BJ (cell line): ENCODE measurements at regions of chr10 and their contacts with region 1.

Region 1: GRCh38 chr10:72048450-72049124 is 39.8 kb downstream of the SPOCK2 start:
- DNase-seq: peak; percentile 51
- H3K4me3 ChIP-seq: no peak overlapping the region
- H3K27me3 ChIP-seq: peaks cover 2% of the 10 kb centered on the region; the same call in 1 of the 2 replicates
- CTCF ChIP-seq: peak; percentile 99

Region 2: DNA sequence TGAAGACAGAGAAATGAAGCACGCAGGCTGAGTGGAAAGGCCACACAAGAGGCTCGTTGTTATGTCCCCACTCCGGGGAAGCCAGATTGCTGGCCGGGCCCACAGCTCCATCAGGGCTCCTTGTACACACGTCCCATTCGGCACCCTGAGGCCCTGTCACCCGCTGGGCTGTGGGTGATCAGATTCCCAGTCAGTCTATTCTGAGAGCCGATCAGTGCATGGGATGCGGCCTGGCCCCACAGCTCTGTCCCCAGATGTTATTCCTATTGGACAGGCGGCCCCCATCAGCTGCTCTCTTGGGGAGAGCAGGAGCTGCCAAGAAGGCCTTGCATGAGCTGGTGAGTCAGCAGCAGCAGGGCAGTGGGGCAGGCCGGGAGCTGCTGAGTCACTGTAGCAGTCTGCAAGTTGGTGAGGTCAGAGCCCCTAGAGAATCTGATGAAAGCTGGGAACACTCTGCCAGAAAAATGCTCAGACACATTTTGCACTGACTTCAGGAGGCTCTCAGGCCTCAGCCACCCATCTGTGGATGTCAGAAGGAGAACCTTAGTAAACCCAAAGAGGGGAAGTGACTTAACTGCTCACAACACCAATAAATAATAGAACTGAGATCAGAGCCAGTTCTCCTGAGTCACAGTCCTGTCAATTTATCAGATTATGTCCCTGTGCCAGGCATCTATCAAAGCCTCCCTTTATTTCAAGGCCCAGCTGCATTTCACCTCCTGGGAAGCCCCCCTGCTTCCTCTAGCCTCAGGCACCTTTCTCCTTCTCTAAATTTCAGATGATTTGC is 188.2 kb before region 1 on chr10:
- CTCF ChIA-PET with region 1: no interaction called
- POLR2A ChIA-PET with region 1: interaction called, 18 read pairs
- DNase-seq: peak; percentile 100
- H3K4me3 ChIP-seq: no peak overlapping the region
- H3K27me3 ChIP-seq: no peaks in the 10 kb centered on the region
- CTCF ChIP-seq: no peak

Region 3: DNA sequence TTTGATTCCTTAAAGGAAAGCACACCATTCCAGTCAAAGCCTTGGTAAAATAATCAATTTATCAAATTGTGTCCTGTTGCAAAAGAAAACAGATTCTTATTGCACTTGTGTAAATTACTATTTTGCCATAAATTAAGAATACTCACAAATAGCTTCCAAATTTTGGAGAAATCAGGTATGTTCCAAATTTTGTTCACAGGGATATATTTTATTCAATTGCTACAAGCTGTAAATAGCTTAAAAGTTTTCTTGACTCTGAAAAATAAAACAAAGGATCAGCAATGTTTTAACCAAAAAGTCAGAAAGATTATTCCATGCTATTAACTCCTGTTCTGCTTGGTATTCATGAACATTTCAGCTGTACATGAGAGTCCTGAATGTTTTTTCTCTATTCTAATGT is 131.8 kb before region 1 on chr10:
- CTCF ChIA-PET with region 1: interaction called, 14 read pairs
- POLR2A ChIA-PET with region 1: no interaction called
- DNase-seq: no peak
- H3K4me3 ChIP-seq: no peak overlapping the region
- H3K27me3 ChIP-seq: no peaks in the 10 kb centered on the region
- CTCF ChIP-seq: no peak

Region 4: DNA sequence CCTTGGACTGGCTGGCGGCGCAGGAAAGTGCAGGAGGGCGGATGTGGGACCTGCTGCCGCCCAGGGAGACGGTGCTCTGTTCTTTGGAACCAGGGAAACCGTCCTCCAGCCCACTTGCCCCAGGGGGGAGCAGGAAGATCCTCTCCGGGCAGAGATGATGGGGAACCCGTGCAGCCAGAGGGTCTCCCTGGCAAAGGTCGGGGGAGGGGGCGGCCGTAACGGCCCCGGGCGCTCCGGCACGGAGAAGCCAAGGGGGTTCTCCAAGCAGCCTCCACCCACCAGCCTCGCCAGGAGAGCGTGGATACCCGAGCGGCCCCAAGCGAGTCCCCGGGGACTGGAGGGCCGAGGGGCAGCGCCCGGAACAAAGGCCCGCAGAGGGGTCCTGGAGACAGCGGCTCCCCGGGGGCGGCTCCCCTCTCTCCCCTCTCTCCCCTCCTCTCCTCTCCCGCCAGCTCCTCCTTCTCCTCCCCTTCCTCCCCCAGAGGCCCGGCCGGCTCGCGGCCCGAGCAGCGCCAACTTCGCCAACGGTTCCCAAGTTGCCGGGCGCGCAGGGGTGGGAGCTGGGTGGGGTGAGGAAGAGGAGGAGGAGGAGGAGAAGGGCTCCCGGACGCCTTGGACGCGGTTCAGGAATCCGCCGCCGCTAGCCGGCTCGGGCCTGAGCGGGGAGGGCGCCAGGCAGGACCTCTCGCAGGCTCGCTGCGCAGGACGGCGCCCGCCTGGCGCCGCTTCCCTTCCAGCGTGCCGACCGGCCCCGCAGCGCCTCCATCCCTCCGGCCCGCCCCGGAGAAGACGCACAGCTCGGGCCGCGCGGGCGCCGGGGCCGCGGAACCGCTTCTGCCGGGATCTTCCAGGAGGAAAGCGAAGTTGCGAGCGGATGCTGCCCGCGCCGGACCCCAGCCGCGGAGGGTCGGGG is 84.6 kb before region 1 on chr10 and contains the start of gene CHST3:
- CTCF ChIA-PET with region 1: interaction called, 237 read pairs
- POLR2A ChIA-PET with region 1: no interaction called
- DNase-seq: no peak
- H3K4me3 ChIP-seq: peak within 1 kb of the TSS; percentile 86
- H3K27me3 ChIP-seq: no peaks in the 10 kb centered on the region
- CTCF ChIP-seq: no peak
- polyA plus RNA-seq, gene CHST3: 15.3 and 20.9 TPM in 2 replicates

Region 5: DNA sequence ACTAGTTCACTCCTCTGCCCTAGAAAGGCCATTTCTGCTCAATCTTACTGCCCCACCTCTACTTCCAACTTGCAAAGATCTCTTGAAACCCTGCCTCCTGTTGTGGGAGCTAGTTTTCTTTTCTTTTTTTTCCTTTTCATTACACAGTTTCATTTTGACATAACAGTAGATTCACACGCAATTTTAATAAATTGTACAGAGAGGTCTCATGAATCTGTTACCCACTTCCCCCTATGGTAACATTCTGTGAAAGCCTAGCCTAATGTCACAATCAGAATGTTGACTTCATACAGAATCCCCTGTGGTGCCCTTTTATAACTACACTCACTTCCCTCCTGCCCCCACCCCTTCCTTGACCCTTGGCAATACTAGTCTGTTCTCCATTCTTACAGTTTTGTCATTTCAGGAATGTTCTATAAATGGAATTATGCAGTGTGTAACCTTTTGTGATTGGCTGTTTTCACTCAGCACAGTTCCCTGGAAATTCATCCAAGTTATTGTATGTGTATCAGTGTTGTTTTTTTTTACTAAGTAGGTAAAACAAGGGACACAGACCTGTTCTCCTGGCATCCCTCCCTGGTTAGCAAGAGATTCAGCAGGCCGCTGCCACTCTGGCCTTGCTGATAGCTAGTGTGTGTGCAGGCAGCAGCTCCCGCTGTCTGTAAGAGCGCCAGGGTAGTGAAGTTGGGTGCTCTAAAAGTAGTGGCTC is 62.9 kb before region 1 on chr10:
- CTCF ChIA-PET with region 1: interaction called, 10 read pairs
- POLR2A ChIA-PET with region 1: no interaction called
- DNase-seq: peak; percentile 59
- H3K4me3 ChIP-seq: no peak overlapping the region
- H3K27me3 ChIP-seq: no peaks in the 10 kb centered on the region
- CTCF ChIP-seq: peak; percentile 23; the same call in 1 of the 2 replicates

Region 6: GRCh38 chr10:72061491-72061890 is 12.9 kb after region 1 on chr10:
- CTCF ChIA-PET with region 1: interaction called, 17 read pairs
- POLR2A ChIA-PET with region 1: no interaction called
- DNase-seq: no peak
- H3K4me3 ChIP-seq: no peak overlapping the region
- H3K27me3 ChIP-seq: peaks cover 7% of the 10 kb centered on the region; the same call in 1 of the 2 replicates
- CTCF ChIP-seq: peak; percentile 30; the same call in 1 of the 2 replicates

Region 7: DNA sequence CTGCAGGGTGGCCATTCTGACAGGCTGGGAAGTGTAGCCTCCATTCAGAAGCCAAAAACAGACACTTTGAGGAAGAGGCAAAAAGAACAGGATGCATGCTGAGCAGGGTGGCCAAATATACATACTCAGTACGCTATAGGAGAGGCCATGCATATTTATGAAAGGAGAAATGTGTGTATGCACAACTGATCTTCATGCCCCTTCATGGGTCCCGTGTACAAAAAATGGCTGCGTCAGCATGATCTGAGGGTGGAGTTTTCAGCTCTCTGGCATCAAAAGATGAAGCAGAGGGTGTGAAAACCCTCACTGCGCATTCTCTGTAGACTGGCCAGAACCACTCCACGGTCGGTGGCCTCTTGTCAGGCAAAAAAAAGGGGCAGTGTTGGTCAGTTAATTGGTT is 809.5 kb after region 1 on chr10:
- CTCF ChIA-PET with region 1: no interaction called
- POLR2A ChIA-PET with region 1: no interaction called
- DNase-seq: no peak
- H3K4me3 ChIP-seq: no peak overlapping the region
- H3K27me3 ChIP-seq: no peaks in the 10 kb centered on the region
- CTCF ChIP-seq: no peak